Activated CD4-positive, alpha-beta T cell treated with anti-CD3 and anti-CD28 coated beads for 36 hours (primary cell): ENCODE measurements at regions of chr11 and their contacts with region 1.

Region 1: GRCh38 chr11:86869966-86870570 is 69.7 kb downstream of the PRSS23 start:
- DNase-seq: peak; percentile 75
- ATAC-seq: peak; percentile 78
- H3K4me3 Mint-ChIP-seq: no peak overlapping the region
- H3K27ac Mint-ChIP-seq: no peak overlapping the region
- H3K4me1 Mint-ChIP-seq: no peaks in the 10 kb centered on the region
- H3K27me3 Mint-ChIP-seq: no peaks in the 10 kb centered on the region

Region 2: DNA sequence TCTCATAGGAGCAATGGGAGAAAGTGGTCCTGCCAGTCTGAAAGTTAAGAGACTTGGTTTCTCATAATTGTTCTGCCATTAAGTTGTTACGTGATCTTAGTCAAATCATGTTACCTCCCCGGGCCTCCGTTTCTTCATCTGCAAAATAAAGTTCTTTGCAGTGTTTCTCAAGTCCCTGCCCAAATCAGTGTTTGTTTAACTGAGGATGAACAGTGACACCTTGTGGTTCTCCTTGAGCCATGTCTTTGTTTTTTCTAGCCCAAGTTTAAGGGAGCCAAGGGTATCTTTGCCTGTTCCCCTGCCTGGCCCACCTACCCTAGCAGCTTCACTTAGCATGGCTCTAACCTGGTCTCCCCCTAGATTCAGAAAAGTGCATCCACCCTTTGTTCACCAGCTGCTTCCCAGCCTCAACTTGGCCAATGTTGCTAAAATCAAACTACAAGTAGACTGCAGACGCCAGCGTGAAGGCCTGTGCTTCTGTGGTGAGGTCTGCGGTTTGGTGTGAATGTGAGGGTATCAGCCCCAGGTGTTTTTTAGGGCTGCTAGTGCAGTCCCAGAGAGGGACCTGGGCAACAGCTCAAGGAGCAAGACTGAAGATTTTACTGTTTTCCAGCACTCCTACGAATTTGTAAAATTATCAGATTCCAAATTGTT is 49.6 kb after region 1 on chr11:
- CTCF ChIA-PET with region 1: interaction called, 10 read pairs
- POLR2A ChIA-PET with region 1: no interaction called
- intact Hi-C with region 1: loop called (anchors 1 kb)
- DNase-seq: no peak
- ATAC-seq: peak; percentile 51
- H3K4me3 Mint-ChIP-seq: no peak overlapping the region
- H3K27ac Mint-ChIP-seq: no peak overlapping the region
- H3K4me1 Mint-ChIP-seq: peaks cover 3% of the 10 kb centered on the region
- H3K27me3 Mint-ChIP-seq: no peaks in the 10 kb centered on the region